Breast epithelium (tissue), 4 donors: ENCODE measurements at regions of chr19 and their contacts with region 1.

Region 1: DNA sequence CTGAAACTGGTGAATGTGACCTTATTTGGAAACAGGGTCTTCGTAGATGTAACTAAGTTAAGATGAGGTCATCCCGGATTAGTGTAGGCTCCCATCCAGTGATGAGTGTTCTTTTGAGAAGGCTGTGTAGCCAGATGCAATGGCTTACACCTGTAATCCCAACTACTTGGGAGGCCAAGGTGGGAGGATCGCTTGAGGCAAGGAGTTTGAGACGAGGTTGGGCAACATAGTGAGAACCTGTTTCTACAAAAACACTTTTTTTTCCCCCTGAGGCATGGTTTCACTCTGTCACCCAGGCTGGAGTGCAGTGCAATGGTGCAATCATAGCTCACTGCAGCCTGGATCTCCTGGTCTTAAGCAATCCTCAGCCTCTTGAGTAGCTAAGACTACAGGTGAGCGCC is 36.4 kb downstream of the FBN3 start:
- DNase-seq: peak in 1 of 2 donors; percentile 26
- H3K4me3 ChIP-seq: no peak overlapping the region
- H3K27ac ChIP-seq: no peak overlapping the region
- H3K4me1 ChIP-seq: no peaks in the 10 kb centered on the region
- H3K27me3 ChIP-seq: no peaks in the 10 kb centered on the region
- CTCF ChIP-seq: no peak
- POLR2A ChIP-seq: no peak

Region 2: GRCh38 chr19:6260912-6261650 is 1851.9 kb before region 1 on chr19:
- intact Hi-C with region 1: no loop called
- DNase-seq: no peak
- H3K4me3 ChIP-seq: no peak overlapping the region
- H3K27ac ChIP-seq: no peak overlapping the region
- H3K4me1 ChIP-seq: no peaks in the 10 kb centered on the region
- H3K27me3 ChIP-seq: no peaks in the 10 kb centered on the region
- CTCF ChIP-seq: peak in 1 of 3 donors; percentile 19
- POLR2A ChIP-seq: no peak

Region 3: GRCh38 chr19:6602729-6603114 is 1510.3 kb before region 1 on chr19:
- intact Hi-C with region 1: loop called (anchors 5 kb)
- DNase-seq: no peak
- H3K4me3 ChIP-seq: no peak overlapping the region
- H3K27ac ChIP-seq: no peak overlapping the region
- H3K4me1 ChIP-seq: no peaks in the 10 kb centered on the region
- H3K27me3 ChIP-seq: no peaks in the 10 kb centered on the region
- CTCF ChIP-seq: no peak
- POLR2A ChIP-seq: no peak

Region 4: DNA sequence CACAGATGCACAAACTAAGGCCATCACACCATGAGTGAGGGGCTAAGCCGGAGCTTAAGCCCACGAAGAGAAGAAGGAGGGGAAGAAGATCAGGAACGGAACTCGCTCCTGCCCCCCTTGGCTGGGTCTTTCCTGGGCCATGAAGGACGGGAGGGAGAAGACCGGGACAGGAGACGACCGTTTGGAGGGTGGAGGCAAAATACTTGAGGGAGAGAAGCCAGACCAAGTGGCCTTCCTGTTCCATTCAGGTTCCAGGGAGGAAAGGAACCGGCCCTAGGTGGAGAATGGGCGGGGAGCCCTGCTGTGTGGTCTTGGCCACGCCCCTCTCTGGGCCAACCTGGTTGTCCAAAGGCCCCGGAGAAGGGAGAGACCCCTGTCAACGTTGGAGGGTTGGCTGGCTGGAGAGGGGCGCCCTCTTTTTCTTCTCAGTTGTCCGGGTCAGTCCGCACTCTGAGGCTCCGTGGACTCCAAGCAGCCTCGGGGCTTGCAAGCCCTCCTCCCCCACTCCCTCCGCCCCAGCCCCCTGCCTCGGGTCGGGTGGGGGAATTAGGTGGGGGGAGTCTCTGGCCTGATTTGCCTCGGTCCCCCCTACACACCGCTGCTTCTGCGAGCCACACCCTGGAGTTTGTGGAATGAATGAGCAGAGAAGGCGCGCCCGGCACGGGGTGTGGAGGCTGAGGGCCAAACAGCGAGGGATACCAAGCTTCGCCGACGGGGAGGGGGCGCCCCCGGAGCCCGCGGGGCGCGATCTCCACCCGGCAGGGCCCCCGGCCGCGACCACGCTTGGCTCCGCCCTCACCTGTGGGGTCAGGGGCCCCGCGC is 35.6 kb after region 1 on chr19:
- intact Hi-C with region 1: no loop called
- DNase-seq: no peak
- H3K4me3 ChIP-seq: peak overlapping the region in 2 of 3 donors; percentile 48 to 66
- H3K27ac ChIP-seq: no peak overlapping the region
- H3K4me1 ChIP-seq: no peaks in the 10 kb centered on the region
- H3K27me3 ChIP-seq: peaks cover 6 to 29% of the 10 kb centered on the region in 2 donors
- CTCF ChIP-seq: no peak
- POLR2A ChIP-seq: no peak

Region 5: DNA sequence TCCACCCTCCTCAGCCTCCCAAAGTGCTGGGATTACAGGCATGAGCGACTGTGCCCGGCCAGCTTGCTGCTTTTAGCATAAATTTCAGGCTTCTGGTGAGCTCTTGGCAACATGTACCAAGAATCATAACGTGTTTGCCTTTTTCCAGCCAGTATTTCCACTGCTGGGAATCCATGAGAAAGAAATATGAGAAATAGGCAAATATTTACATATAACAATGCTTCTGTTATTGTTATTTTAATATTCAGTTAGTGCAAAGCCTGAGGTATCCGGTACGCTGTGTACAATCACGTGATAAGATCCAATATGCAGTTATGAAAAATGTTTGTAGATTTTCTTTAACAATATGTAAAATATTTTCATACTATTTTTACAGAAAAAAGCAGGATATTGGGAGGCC is 67.0 kb after region 1 on chr19:
- intact Hi-C with region 1: no loop called
- DNase-seq: no peak
- H3K4me3 ChIP-seq: no peak overlapping the region
- H3K27ac ChIP-seq: peak overlapping the region in 1 of 2 donors; percentile 48
- H3K4me1 ChIP-seq: no peaks in the 10 kb centered on the region
- H3K27me3 ChIP-seq: no peaks in the 10 kb centered on the region
- CTCF ChIP-seq: no peak
- POLR2A ChIP-seq: no peak

Region 6: DNA sequence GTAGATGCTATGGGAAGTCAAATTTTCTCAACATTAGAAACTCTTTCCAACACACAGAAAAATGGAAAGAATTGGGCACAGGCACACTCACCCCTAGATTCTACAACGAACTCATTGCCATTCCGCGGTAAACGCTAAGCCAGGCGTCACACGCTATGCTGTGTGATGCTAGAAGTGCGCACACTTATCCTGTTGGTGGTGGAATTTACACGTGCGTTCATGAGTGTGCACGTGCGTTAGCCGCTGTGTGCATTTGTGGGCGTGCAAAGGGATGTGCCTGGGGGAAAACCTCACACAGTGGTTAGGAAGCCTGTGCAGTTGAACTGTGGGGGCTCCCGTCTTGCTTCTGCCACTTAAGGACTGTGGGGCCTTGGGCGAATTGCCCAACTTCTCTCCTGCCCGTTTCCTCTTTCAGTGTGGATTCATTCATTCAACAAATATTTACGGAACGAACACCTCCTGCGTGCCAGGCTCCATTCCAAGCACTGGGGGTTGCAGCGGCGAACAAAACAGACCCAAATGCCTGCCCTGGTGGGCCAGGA is 525.1 kb after region 1 on chr19:
- intact Hi-C with region 1: loop called (anchors 10 kb)
- DNase-seq: no peak
- H3K4me3 ChIP-seq: no peak overlapping the region
- H3K27ac ChIP-seq: no peak overlapping the region
- H3K4me1 ChIP-seq: no peaks in the 10 kb centered on the region
- H3K27me3 ChIP-seq: no peaks in the 10 kb centered on the region
- CTCF ChIP-seq: no peak
- POLR2A ChIP-seq: no peak